ENCODE measurements at regions of chr11 and their contacts with region 1.

Region 1: GRCh38 chr11:8328848-8329330 is 65.2 kb upstream of the LMO1 start:
- DNase-seq: peak; percentile 72 to 95
- H3K4me3 ChIP-seq: peak overlapping the region in 1 of 4 experiments; percentile 36; a peak in 1 of 8 replicates
- H3K27ac ChIP-seq: no peak overlapping the region
- H3K4me1 ChIP-seq: peaks cover 5 to 25% (median 12%) of the 10 kb centered on the region in 4 experiments
- H3K27me3 ChIP-seq: no peaks in the 10 kb centered on the region; a peak in 1 of 7 replicates
- CTCF ChIP-seq: peak; percentile 80 to 92 (median 90)
- EP300 ChIP-seq: peak in 1 of 2 experiments; percentile 51; a peak in 1 of 3 replicates
- POLR2A ChIP-seq: no peak
- RAD21 ChIP-seq: peak; percentile 55 to 68

Region 2: DNA sequence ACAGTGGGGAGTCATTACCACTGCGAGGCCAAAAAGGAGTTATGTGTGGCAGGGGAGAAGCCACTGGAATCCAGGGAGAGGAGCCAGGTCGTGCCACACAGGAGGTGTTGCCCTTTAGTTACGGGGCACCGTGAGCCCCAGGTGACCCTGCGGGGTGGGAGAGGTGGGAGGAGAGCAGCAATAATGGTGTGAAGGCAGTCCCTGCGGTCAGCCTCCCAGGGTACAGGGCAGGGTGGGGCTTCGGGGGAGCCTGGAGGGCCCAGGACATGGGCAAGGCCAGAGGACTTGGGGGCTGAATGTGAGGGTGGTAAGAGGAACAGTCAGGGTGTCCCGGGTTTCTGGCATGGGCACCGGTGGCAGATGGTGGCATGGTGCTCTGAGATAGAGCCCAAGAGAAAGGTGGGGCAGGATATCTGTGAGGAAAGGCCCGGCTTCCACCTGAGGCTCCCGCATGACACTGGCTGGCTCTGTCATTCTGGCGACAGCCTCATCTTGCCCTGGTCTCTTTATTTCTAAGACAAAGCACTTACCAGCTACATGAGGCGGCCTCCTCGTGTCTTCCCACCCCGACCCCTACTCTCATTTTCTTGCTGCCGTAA is 17.4 kb after region 1 on chr11:
- CTCF ChIA-PET with region 1: interaction called, 21 read pairs
- POLR2A ChIA-PET with region 1: no interaction called
- DNase-seq: no peak
- H3K4me3 ChIP-seq: no peak overlapping the region
- H3K27ac ChIP-seq: no peak overlapping the region
- H3K4me1 ChIP-seq: peaks cover 0 to 2% (median 0%) of the 10 kb centered on the region in 4 experiments; a peak in 3 of 7 replicates
- H3K27me3 ChIP-seq: no peaks in the 10 kb centered on the region; a peak in 1 of 7 replicates
- CTCF ChIP-seq: no peak
- EP300 ChIP-seq: no peak
- POLR2A ChIP-seq: no peak
- RAD21 ChIP-seq: no peak

Region 3: GRCh38 chr11:8426076-8426475 is 97.2 kb after region 1 on chr11:
- CTCF ChIA-PET with region 1: no interaction called
- POLR2A ChIA-PET with region 1: no interaction called
- DNase-seq: no peak
- H3K4me3 ChIP-seq: no peak overlapping the region
- H3K27ac ChIP-seq: no peak overlapping the region
- H3K4me1 ChIP-seq: no peaks in the 10 kb centered on the region
- H3K27me3 ChIP-seq: no peaks in the 10 kb centered on the region
- CTCF ChIP-seq: no peak
- EP300 ChIP-seq: no peak
- POLR2A ChIP-seq: no peak
- RAD21 ChIP-seq: no peak

Region 4: GRCh38 chr11:8523396-8523795 is 194.5 kb after region 1 on chr11:
- CTCF ChIA-PET with region 1: no interaction called
- POLR2A ChIA-PET with region 1: no interaction called
- DNase-seq: no peak
- H3K4me3 ChIP-seq: no peak overlapping the region
- H3K27ac ChIP-seq: no peak overlapping the region
- H3K4me1 ChIP-seq: peaks cover 0 to 4% (median 0%) of the 10 kb centered on the region in 4 experiments; a peak in 2 of 7 replicates
- H3K27me3 ChIP-seq: no peaks in the 10 kb centered on the region
- CTCF ChIP-seq: no peak
- EP300 ChIP-seq: no peak
- POLR2A ChIP-seq: no peak
- RAD21 ChIP-seq: no peak

Measured in H1 (cell line).